Activated T-helper 1 cell treated with anti-CD3 and anti-CD28 coated beads, Interleukin-12 subunit alpha, Interleukin-12 subunit beta, Interleukin-2, Interleukin-4 antibody, amounts not matched to agents 30 ng/mL and 10 ng/mL and 1 ng/mL, durations not matched to agents 14 hours and 24 hours and 36 hours (primary cell): ENCODE measurements at regions of chr4 and their contacts with region 1.

Region 1: GRCh38 chr4:1870578-1871443 is at the start of gene NSD2:
- DNase-seq: peak; percentile 89
- H3K4me3 Mint-ChIP-seq: peak within 1 kb of the TSS; percentile 100
- H3K27ac Mint-ChIP-seq: peak within 1 kb of the TSS; percentile 100
- H3K4me1 Mint-ChIP-seq: peaks cover 38% of the 10 kb centered on the region
- H3K27me3 Mint-ChIP-seq: peaks cover 1% of the 10 kb centered on the region
- total RNA-seq, gene NSD2: 200 and 202 TPM in 2 replicates

Region 2: DNA sequence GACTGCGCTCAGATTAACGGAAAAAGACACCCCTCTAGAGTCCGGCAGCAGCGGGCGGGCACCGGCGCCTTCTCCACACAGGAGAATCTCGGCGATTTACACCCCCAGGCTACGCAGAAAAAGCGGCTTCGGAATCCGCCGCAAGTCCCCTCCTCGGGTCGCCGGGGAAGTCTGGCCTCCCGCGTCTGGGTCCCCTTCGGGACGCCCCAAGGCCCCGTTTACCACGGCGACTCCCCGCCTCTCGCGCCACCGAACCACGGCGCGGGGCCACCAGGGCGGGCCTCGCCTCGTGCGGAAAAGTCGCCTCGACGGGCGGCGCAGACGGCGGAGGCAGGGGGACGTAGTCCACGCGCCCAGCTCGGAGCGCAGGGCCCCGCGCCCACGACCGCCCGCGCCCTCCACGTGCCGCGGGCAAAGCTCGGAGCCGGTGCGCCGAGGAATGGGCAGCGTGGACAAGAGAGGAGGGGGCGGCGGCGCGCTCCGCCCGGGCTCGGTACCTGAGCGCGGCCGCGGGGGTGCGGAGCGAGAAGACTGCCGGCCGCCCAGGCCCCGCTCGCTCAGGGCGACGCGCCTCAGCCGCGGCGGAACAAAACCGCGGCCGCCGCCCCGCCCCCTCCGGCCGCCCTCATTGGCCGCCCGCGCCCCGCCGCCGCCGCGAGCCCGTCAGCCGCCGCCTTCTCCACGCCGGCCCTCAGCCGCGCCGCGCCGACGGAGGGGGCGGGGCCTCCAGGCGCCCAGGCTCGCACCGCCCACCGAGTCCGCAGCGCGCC is 186.9 kb before region 1 on chr4 and contains the start of gene FAM53A:
- intact Hi-C with region 1: loop called (anchors 1 kb)
- DNase-seq: peak; percentile 93
- H3K4me3 Mint-ChIP-seq: peak within 1 kb of the TSS; percentile 87
- H3K27ac Mint-ChIP-seq: peak within 1 kb of the TSS; percentile 90
- H3K4me1 Mint-ChIP-seq: peaks cover 12% of the 10 kb centered on the region
- H3K27me3 Mint-ChIP-seq: peaks cover 2% of the 10 kb centered on the region
- total RNA-seq, gene FAM53A: 2.5 and 5.5 TPM in 2 replicates

Region 3: GRCh38 chr4:1721004-1721665 is 149.7 kb before region 1 on chr4 and contains the starts of genes TACC3 and TMEM129:
- intact Hi-C with region 1: loop called (anchors 2 kb)
- DNase-seq: peak; percentile 90
- H3K4me3 Mint-ChIP-seq: peak within 1 kb of the TSS; percentile 94
- H3K27ac Mint-ChIP-seq: peak within 1 kb of the TSS; percentile 97
- H3K4me1 Mint-ChIP-seq: peaks cover 45% of the 10 kb centered on the region
- H3K27me3 Mint-ChIP-seq: no peaks in the 10 kb centered on the region
- total RNA-seq, gene TACC3: 134 and 139 TPM in 2 replicates
- total RNA-seq, gene TMEM129: 27.4 and 28.4 TPM in 2 replicates

Region 4: GRCh38 chr4:1899149-1900086 is 28.6 kb after region 1 on chr4:
- intact Hi-C with region 1: loop called (anchors 1 kb)
- DNase-seq: peak; percentile 69
- H3K4me3 Mint-ChIP-seq: no peak overlapping the region
- H3K27ac Mint-ChIP-seq: peak overlapping the region; percentile 87
- H3K4me1 Mint-ChIP-seq: peaks cover 56% of the 10 kb centered on the region
- H3K27me3 Mint-ChIP-seq: no peaks in the 10 kb centered on the region

Region 5: DNA sequence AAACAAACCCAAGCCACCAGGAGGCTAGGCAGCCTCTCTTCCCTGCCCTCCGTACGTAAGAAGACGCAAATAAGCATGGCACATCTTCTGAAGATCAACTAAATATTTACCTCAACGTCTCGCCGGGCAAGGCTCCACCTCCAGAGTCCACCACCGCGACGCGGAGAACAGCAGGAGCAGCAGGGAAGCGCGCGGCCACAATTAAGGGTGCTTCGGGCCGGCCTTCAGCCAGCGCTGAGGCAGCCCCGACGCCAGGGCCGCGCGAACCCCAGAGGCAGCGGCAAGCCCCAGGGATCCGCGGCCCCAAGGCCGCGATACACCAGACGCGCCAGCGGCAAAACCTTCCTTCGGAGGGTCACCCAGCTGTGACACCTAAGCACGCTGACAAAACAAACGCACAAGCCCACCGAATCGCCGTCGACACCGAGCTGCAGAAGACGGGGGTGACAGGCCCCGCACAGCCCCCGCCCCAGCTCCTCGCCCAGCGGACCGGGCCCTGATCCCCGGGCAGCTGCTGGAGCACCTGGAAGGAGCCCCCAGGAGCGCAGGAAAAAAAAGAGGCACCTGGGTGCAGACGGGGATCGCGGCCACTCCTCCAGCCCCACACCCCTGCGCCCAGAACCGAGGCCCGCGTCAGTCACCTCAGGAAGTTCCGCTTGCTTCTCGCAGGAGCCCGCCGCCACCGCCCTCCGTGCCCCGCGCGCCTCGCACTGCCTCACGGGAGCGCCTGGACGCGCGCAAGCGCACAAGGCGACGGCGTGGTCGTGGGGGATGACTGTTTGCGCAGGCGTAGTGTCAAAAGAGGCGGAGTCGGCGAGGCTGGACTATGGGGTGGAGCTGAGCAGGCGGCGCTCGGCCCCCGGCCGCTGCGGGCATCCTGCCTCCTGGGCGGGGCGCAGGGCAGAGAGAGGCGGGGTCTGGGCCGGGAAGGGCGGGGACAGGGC is 370.9 kb after region 1 on chr4 and contains the starts of genes HAUS3 and POLN:
- intact Hi-C with region 1: loop called (anchors 2 kb)
- DNase-seq: peak; percentile 100
- H3K4me3 Mint-ChIP-seq: peak within 1 kb of the TSS; percentile 85
- H3K27ac Mint-ChIP-seq: peak within 1 kb of the TSS; percentile 90
- H3K4me1 Mint-ChIP-seq: peaks cover 53% of the 10 kb centered on the region
- H3K27me3 Mint-ChIP-seq: peaks cover 2% of the 10 kb centered on the region
- total RNA-seq, gene HAUS3: 19.2 and 19.9 TPM in 2 replicates
- total RNA-seq, gene POLN: 2.1 and 3.5 TPM in 2 replicates

Region 6: DNA sequence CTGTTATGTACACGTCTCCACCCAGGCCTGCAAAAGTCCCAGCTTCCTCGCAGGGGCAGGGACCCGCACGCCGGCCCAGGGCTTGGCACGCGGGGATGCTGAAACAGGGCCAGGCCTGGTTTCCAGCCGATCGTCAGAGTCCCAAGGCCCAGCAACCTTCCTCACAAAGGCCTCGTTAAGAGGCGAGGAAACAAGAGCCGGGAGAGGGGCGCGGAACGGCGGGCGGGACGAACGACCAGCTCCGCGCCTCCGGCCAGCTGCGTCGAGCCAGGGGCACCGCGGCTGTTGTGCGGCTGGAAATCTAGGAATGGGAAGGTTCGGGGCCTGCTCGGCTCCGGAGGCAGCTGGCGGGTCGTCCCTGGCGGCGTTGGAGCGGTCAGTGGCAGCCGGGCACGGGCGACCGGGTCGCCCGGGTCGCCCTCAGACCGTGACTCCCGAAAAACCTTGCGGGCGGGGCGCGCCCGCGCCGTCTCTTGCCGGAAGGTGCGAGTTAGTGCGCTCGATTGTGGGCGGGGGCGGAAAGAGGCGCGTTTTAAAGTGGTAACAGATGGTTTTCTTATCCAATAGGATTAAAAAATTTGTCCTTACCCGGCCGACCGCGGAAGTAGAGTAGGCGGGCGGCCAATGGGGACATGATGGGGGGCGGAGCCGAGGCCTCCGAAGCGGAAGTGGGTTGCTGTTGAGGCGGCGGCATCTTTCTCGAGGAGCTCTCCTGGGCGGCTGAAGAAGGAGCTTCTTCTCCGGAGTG is 597.8 kb after region 1 on chr4 and contains the start of gene RNF4:
- intact Hi-C with region 1: loop called (anchors 5 kb)
- DNase-seq: peak; percentile 94
- H3K4me3 Mint-ChIP-seq: peak within 1 kb of the TSS; percentile 95
- H3K27ac Mint-ChIP-seq: peak within 1 kb of the TSS; percentile 96
- H3K4me1 Mint-ChIP-seq: peaks cover 29% of the 10 kb centered on the region
- H3K27me3 Mint-ChIP-seq: peaks cover 1% of the 10 kb centered on the region
- total RNA-seq, gene RNF4: 93.7 and 112 TPM in 2 replicates